ENCODE measurements at regions of chrX and their contacts with region 1.

Region 1: GRCh38 chrX:12771445-12772069 is 19.7 kb upstream of the PRPS2 start:
- DNase-seq: no peak
- H3K4me3 ChIP-seq: no peak overlapping the region
- H3K27ac ChIP-seq: no peak overlapping the region
- H3K4me1 ChIP-seq: no peaks in the 10 kb centered on the region
- H3K27me3 ChIP-seq: peaks cover 2% of the 10 kb centered on the region
- CTCF ChIP-seq: peak; percentile 44 to 54

Region 2: DNA sequence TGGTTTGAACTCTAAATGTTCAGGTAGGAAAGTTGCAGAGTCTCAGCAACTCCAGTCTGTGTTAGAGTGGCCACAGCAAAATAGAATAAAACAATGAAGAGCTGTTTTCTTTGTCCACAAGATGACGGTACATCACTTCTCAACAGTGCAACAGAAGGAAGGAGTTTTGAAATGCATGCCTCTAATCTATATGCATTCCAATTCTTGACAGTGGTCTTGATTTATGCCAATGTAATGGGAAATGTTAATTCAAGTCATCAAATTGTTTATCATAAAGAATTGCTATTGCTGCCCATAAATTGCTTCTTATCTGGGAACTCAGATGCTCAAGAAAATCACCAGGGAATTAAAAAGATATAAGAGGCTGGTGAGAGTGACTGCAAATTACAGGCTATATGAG is 175.8 kb before region 1 on chrX:
- CTCF ChIA-PET with region 1: interaction called, 3 read pairs
- dilution Hi-C with region 1: no loop called
- in situ Hi-C with region 1: no loop called
- intact Hi-C with region 1: loop called (anchors 10 kb)
- DNase-seq: no peak
- H3K4me3 ChIP-seq: no peak overlapping the region
- H3K27ac ChIP-seq: no peak overlapping the region
- H3K4me1 ChIP-seq: no peaks in the 10 kb centered on the region
- H3K27me3 ChIP-seq: no peaks in the 10 kb centered on the region
- CTCF ChIP-seq: peak in 1 of 2 donors; percentile 35